Aorta (tissue), 5 donors: ENCODE measurements at regions of chr11 and their contacts with region 1.

Region 1: DNA sequence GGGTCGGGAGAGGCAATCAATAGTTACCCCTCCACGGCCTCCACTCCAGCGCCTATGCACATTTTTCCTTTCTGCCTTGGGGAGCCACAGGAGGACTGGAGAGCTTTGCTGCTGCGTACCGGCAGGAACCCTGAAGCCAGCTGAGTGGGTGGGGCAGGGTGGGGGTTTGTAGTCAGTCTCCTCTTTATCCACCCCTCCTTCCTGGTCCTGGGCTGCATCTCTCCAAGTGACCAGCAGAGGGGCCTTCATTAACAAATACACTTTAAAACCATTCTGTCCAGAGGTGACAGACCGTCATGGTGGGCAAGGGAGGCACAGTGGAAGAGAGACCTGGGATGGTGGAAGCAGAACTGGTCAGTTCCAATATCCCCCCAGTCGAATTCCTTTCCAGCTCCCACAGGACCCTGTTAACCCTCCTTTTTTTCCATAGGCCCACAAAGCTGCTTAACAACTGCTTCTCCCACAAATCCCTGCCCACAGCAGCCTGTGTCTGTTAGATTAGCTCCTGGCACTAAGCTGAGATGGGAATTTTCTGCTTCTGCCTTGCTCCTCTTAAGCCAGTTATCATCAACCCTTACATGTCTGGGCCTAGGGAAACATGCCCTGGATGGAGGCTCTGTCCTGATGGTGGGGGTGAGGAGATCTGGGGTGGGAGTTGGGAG is 3.9 kb upstream of the ABCG4 start:
- DNase-seq: peak in 1 of 2 donors; percentile 83
- ATAC-seq: peak; percentile 80
- H3K4me3 ChIP-seq: no peak overlapping the region
- H3K27ac ChIP-seq: no peak overlapping the region
- H3K4me1 ChIP-seq: no peaks in the 10 kb centered on the region
- H3K27me3 ChIP-seq: no peaks in the 10 kb centered on the region

Region 2: GRCh38 chr11:119196833-119197483 is 52.0 kb after region 1 on chr11:
- intact Hi-C with region 1: loop called (anchors 5 to 10 kb)
- DNase-seq: no peak
- ATAC-seq: peak; percentile 85
- H3K4me3 ChIP-seq: no peak overlapping the region
- H3K27ac ChIP-seq: no peak overlapping the region
- H3K4me1 ChIP-seq: no peaks in the 10 kb centered on the region
- H3K27me3 ChIP-seq: no peaks in the 10 kb centered on the region

Region 3: DNA sequence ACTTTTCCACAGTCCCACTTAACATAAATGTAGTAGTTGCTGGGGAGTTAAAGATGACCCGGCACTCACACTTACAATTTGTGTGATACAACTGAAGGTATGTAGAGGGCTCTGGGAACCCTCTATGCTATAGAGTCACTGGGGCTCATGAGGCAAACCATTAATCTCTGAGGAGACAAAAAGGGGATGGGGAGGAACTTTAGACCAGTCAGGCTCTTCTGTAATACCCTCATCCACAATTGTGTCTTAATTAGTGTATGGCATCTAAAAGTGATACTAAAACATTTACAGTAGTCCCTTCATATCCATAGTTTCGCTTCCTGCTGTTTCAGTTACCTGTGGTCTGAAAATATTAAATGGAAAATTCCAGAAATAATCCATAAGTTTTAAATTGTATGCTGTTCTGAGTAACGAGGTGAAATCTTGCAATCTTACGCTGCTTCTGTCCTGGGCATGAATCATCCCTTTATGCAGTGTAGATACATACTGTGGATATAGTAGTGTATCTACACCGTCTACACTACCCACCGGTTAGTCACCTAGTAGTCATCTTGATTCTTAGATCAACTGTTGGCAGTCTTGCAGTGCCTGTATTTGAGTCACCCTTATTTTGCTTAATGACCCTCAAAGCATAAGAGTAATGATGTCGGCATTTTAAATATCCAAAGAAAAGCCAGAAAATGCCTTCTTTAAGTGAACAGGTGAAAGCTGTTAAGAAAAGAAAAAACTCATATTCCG is 73.4 kb after region 1 on chr11:
- intact Hi-C with region 1: no loop called
- DNase-seq: no peak
- ATAC-seq: no peak
- H3K4me3 ChIP-seq: no peak overlapping the region
- H3K27ac ChIP-seq: no peak overlapping the region
- H3K4me1 ChIP-seq: no peaks in the 10 kb centered on the region
- H3K27me3 ChIP-seq: no peaks in the 10 kb centered on the region

Region 4: GRCh38 chr11:119334174-119334930 is 189.4 kb after region 1 on chr11 and contains the start of gene RNF26:
- intact Hi-C with region 1: loop called in 1 of 2 experiments (anchors 10 kb)
- DNase-seq: peak; percentile 95 to 96
- ATAC-seq: peak; percentile 94
- H3K4me3 ChIP-seq: peak within 1 kb of the TSS; percentile 87 to 98
- H3K27ac ChIP-seq: peak within 1 kb of the TSS in 1 of 2 donors; percentile 74
- H3K4me1 ChIP-seq: no peaks in the 10 kb centered on the region
- H3K27me3 ChIP-seq: no peaks in the 10 kb centered on the region
- total RNA-seq, gene RNF26: 16.8 to 17.5 TPM